PC-9 (cell line): ENCODE measurements at regions of chr9 and their contacts with region 1.

Region 1: GRCh38 chr9:22008736-22009562 is at the start of gene CDKN2B:
- DNase-seq: peak; percentile 86 to 94
- H3K4me3 ChIP-seq: peak within 1 kb of the TSS; percentile 100
- H3K27ac ChIP-seq: peak within 1 kb of the TSS; percentile 92
- H3K4me1 ChIP-seq: peaks cover 29% of the 10 kb centered on the region
- H3K27me3 ChIP-seq: no peaks in the 10 kb centered on the region
- CTCF ChIP-seq: peak; percentile 82
- total RNA-seq, gene CDKN2B: 33.8 and 40.2 TPM in 2 replicates

Region 2: GRCh38 chr9:22103650-22104575 is 95.0 kb after region 1 on chr9:
- CTCF ChIA-PET with region 1: no interaction called
- POLR2A ChIA-PET with region 1: no interaction called
- intact Hi-C with region 1: loop called (anchors 1 kb)
- DNase-seq: peak in 1 of 2 experiments; percentile 51
- H3K4me3 ChIP-seq: peak overlapping the region; percentile 18; the same call in 1 of the 2 replicates
- H3K27ac ChIP-seq: peak overlapping the region; percentile 94
- H3K4me1 ChIP-seq: peaks cover 53% of the 10 kb centered on the region
- H3K27me3 ChIP-seq: no peaks in the 10 kb centered on the region
- CTCF ChIP-seq: no peak

Region 3: DNA sequence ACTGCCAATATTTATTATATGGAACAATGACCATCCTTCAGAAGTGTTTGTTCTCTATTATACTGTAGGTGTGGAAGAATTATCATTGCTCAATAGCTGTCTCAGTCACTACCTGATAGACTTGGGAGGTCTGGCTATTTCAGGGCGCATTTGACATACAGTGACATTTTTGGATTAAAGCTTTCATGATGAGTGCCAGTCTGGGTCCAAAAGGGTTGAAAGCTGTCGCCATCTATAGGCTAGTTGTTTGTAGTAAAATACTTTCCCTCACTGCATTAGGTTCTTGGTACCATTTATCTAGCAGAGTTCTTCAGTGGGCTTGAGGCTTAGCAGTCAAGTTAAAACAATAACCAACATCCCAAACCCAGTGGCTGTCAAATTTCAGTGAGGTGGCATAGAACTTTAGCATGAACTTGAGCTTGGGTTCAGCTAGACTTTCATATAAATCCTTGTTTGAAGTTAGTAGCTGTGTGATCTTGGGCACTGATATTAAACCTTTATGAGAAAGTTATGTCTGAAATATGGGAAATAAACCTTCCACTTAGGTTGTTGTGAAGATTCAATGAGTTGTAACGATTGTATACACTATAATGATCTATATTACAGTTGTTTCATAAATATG is 110.7 kb after region 1 on chr9:
- CTCF ChIA-PET with region 1: interaction called, 5 read pairs
- POLR2A ChIA-PET with region 1: no interaction called
- intact Hi-C with region 1: loop called (anchors 2 kb)
- DNase-seq: no peak
- H3K4me3 ChIP-seq: no peak overlapping the region
- H3K27ac ChIP-seq: no peak overlapping the region
- H3K4me1 ChIP-seq: peaks cover 15% of the 10 kb centered on the region; the same call in 1 of the 2 replicates
- H3K27me3 ChIP-seq: no peaks in the 10 kb centered on the region
- CTCF ChIP-seq: peak; percentile 25; the same call in 1 of the 2 replicates

Region 4: DNA sequence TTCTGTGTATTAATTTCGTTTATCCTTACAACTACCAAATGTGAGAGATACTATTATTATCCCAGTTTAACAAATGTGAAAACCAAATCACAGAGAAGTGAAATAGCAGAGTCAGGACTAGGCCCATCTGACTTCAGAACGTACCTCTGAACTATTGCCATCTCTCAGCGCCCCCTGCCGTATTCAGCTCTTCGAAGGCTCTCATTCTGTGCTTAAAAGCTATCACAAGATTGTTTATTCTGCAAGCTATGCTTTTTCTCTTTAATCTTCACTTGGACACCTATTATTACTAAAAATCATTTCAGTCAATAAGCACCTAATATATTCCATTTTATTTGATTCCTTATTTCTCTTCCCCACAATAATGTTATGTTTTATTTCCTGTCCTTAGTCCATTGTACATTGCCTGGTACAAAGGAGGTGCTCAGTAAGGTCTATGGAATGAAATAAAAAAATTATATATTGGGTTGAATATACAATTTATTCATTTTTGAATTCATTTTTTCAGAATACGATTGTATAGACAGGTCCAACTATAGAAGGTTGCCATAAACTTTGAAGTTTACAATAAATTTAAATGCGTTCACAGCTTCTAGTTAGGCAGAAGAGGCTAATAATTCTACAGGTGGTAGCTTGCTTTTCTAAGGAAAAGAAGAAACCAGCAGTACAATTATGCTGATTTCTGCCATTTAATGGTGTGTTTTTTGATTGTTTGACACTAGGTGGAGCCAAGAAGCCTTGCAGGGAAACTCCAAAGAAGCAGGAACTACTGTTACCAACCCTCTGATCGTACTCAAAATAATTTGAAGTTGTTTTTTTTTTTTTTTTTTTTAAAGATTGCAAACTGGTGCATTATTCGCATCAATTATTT is 235.4 kb after region 1 on chr9:
- CTCF ChIA-PET with region 1: interaction called, 4 read pairs
- POLR2A ChIA-PET with region 1: interaction called, 3 read pairs
- intact Hi-C with region 1: loop called (anchors 1 kb)
- DNase-seq: peak in 1 of 2 experiments; percentile 49
- H3K4me3 ChIP-seq: no peak overlapping the region
- H3K27ac ChIP-seq: no peak overlapping the region
- H3K4me1 ChIP-seq: peaks cover 31% of the 10 kb centered on the region
- H3K27me3 ChIP-seq: no peaks in the 10 kb centered on the region
- CTCF ChIP-seq: peak; percentile 14

Region 5: DNA sequence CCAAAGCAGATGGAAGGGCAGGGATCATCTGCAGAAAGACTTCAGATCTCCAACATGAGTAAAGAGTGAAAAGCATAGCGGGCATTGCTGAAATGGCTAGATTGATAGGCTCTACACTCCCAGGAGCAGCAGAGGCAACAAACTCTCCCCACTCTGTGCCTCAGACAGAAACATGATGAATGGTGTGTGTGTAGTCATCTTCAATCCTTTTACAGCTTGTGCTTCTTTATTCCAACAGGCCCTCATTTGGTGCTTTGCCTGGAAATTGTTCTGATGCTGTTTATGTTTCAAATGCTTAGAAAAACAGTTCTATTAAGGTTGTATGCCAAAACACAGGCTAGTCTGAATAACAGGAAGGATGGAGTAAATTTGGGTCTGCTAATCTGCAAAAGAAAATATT is 613.9 kb after region 1 on chr9:
- CTCF ChIA-PET with region 1: no interaction called
- POLR2A ChIA-PET with region 1: no interaction called
- intact Hi-C with region 1: no loop called
- DNase-seq: no peak
- H3K4me3 ChIP-seq: no peak overlapping the region
- H3K27ac ChIP-seq: no peak overlapping the region
- H3K4me1 ChIP-seq: no peaks in the 10 kb centered on the region
- H3K27me3 ChIP-seq: no peaks in the 10 kb centered on the region
- CTCF ChIP-seq: no peak